Head of caudate nucleus (tissue), 42 donors: ENCODE measurements at regions of chr10 and their contacts with region 1.

Region 1: GRCh38 chr10:32367793-32368453 is 21.0 kb upstream of the EPC1 start:
- DNase-seq: peak; percentile 32 to 91 (median 76)

Region 2: GRCh38 chr10:32190890-32191491 is 176.9 kb before region 1 on chr10:
- intact Hi-C with region 1: loop called (anchors 5 kb)
- DNase-seq: peak in 1 of 42 donors; percentile 24

Region 3: DNA sequence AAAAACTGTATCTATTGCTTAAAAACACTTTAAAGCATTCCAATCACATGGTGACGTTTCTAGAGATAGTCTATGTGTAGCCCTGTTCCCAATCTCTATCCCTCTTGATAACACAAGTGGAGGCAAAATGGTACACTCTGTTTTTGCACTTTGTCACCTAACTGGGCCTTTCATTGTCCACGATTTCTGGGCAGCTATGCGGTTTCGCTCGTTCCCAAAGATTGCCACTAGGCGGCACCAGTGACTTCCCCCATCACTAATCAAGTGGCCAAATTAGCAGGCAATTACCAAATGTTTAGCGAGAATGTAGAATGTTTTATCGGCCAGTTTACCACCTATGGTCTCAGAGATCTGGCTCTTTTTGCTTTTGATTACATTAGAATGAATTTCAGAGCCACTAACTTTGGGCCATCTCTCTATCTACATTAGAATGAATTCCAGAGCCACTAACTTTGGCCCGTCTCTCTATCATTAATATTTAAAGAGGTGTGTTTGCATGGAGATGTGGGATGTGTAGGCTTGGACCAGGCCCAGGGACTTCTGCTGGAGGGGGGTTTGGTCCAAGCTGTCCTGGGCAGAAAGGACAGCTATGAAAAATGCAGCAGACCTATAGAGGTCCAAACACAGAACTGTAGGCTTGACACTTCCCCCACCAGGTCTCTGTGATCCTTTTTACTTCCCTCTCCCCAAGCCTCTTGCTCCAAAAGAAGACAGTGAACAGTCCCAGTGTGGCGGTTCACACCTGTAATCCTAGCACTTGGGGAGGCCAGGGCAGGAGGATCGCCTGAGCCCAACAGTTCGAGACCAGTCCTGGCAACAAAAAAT is 111.1 kb before region 1 on chr10:
- intact Hi-C with region 1: loop called (anchors 5 kb)
- DNase-seq: peak in 41 of 42 donors; percentile 23 to 91 (median 71)

Region 4: DNA sequence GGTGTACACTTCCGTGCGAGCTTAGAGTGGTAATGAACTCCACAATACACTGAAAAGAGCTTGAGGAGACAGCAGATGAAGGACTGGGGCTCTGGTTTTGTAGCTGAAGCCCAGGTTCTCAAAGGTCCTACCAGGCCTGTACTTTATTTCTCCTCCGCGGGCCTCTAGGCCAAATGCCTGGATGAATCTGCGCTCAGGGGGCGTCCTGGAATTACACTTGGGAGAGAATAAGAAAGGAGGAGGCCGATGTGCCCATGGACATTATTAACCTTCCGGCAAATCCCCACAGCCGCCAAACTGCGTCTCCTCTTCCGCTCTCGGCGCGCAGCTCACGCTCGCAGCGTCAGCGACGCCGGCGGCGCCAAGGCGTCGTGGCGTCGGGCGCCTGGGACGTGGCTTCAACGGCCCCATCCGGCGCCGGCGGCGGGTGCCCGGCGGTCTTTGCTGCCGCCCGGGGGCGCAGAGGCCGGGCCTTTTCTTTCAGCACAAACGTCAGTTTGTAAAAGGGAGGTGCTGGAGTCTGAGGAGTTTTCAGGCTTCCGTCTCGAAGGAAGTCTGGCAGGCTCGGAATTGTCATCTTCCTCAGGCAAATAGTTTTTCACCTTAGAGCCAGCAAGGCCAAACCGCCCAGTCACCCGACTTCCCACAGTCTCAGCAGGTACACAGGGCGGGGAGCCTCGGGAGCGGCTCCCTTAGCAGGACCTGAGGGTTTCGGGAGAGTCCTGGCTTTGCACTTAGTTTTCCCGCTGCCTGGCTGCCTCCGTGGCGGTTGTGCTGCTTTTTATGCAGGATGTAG is 78.0 kb after region 1 on chr10 and contains the start of gene CCDC7:
- intact Hi-C with region 1: loop called (anchors 5 kb)
- DNase-seq: peak; percentile 43 to 92 (median 84)